Activated CD8-positive, alpha-beta T cell treated with anti-CD3 and anti-CD28 coated beads for 36 hours (primary cell): ENCODE measurements at regions of chr12 and their contacts with region 1.

Region 1: DNA sequence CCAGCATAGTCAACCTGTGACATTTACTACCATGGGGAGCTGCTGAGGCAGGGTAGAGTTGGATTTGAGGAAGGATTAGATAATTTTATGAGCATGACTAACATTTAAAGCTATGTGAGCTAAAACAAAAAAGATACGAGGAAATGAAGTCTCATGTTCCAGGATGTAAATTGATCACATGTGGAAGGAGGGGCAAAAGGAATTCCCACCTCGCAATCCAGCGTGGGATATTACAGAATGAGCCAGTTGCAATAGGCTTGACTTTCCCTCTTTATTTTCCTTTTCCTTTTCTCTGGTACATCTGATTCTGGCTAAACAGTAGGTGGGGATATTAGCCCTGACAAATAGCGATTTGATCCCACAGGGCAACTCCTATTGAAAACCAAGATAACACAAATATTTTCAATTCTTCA is 214.9 kb upstream of the HMGA2 start:
- DNase-seq: no peak
- ATAC-seq: no peak
- H3K4me3 Mint-ChIP-seq: no peak overlapping the region
- H3K27ac Mint-ChIP-seq: no peak overlapping the region
- H3K4me1 Mint-ChIP-seq: no peaks in the 10 kb centered on the region
- H3K27me3 Mint-ChIP-seq: peaks cover 20% of the 10 kb centered on the region
- CTCF ChIP-seq: no peak

Region 2: DNA sequence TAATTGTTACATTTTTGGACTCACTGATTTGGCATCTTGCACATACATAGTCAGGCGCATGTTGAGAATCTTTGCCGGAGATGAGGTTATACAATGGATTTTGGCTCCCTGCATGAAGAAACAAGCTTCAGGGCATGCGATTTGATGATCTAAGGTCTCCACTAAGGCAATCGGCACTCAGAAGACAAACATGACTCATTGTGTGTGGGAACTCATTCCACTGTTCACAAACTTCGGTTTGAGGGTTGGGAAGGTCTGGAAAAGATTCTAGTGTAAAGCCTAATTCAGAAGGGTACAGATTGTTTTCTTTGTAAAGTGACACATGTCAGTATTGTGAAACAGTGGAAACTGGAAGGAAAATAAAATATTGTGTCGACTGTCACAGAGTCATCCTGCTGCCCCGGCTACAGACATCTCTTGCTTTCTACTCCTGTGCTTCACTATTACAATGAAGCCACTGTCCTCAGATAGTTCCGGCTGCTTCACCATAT is 22.3 kb after region 1 on chr12:
- CTCF ChIA-PET with region 1: no interaction called
- POLR2A ChIA-PET with region 1: no interaction called
- intact Hi-C with region 1: no loop called
- DNase-seq: no peak
- ATAC-seq: no peak
- H3K4me3 Mint-ChIP-seq: no peak overlapping the region
- H3K27ac Mint-ChIP-seq: no peak overlapping the region
- H3K4me1 Mint-ChIP-seq: no peaks in the 10 kb centered on the region
- H3K27me3 Mint-ChIP-seq: peaks cover 8% of the 10 kb centered on the region
- CTCF ChIP-seq: no peak

Region 3: DNA sequence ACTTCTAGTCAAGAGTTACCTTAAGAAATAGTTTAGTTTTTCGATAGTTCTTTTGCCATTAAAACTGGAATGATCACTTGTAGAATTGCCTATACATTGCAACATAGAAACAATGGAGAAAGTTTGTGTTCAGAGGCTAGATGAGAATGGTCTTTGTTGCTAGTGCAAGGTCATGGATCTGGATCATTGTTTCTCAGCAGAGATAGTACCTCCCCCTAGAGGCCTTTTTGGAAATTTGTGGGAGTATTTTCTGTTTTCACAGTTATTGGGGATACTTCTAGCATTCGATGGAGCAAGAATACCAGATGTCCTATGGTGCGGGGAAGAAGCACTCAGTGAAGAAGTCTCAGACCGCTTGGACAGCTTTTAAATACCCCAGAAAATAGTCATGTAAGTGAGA is 76.1 kb after region 1 on chr12:
- CTCF ChIA-PET with region 1: no interaction called
- POLR2A ChIA-PET with region 1: no interaction called
- intact Hi-C with region 1: loop called (anchors 5 kb)
- DNase-seq: no peak
- ATAC-seq: no peak
- H3K4me3 Mint-ChIP-seq: no peak overlapping the region
- H3K27ac Mint-ChIP-seq: no peak overlapping the region
- H3K4me1 Mint-ChIP-seq: no peaks in the 10 kb centered on the region
- H3K27me3 Mint-ChIP-seq: peaks cover 2% of the 10 kb centered on the region
- CTCF ChIP-seq: peak; percentile 52